Panc1 (cell line): ENCODE measurements at regions of chr21 and their contacts with region 1.

Region 1: GRCh38 chr21:42145569-42146272 is 73.2 kb upstream of the ABCG1 start:
- DNase-seq: no peak
- ATAC-seq: peak; percentile 80
- H3K4me3 ChIP-seq: no peak overlapping the region
- H3K27ac ChIP-seq: no peak overlapping the region
- H3K4me1 ChIP-seq: no peaks in the 10 kb centered on the region; the same call in 1 of the 2 replicates
- H3K27me3 ChIP-seq: no peaks in the 10 kb centered on the region
- CTCF ChIP-seq: peak; percentile 87

Region 2: DNA sequence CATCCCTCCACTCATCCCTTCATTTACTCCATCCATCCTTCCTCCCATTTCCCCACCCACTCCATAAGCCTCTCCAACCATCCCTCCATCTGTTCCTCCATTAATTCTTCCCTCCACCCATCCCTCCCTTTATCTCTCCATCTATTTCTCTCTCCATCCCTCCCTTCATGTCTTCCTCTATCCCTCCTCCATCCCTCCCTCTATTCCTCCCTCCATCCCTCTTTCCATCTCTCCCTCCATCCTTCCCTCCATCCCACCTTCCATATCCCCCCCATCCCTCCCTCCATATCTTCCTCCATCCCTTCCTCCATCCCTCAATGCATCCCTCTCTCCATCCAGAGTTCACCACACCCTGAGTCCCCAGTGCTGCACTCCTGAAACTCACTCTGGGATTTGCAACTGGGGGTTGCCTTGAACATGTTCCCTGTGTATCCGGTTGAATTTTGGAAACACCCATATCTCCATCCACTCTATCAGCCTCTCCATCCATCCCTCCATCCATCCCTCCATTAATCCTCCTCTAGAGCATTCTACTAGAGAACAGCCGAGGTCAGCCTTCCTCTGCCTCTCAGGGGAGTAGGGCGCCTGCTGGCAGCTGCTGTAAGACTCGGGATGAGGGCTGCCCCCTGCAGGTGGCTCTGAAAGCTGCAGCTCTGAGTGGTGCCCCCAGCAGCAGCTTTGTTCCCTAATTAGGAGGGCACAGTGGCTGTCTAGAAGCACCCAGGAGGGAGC is 112.6 kb after region 1 on chr21:
- CTCF ChIA-PET with region 1: interaction called, 13 read pairs
- POLR2A ChIA-PET with region 1: no interaction called
- in situ Hi-C with region 1: no loop called
- intact Hi-C with region 1: loop called (anchors 10 kb)
- DNase-seq: peak; percentile 8
- ATAC-seq: peak; percentile 78
- H3K4me3 ChIP-seq: no peak overlapping the region
- H3K27ac ChIP-seq: no peak overlapping the region
- H3K4me1 ChIP-seq: no peaks in the 10 kb centered on the region; the same call in 1 of the 2 replicates
- H3K27me3 ChIP-seq: no peaks in the 10 kb centered on the region
- CTCF ChIP-seq: peak; percentile 80

Region 3: DNA sequence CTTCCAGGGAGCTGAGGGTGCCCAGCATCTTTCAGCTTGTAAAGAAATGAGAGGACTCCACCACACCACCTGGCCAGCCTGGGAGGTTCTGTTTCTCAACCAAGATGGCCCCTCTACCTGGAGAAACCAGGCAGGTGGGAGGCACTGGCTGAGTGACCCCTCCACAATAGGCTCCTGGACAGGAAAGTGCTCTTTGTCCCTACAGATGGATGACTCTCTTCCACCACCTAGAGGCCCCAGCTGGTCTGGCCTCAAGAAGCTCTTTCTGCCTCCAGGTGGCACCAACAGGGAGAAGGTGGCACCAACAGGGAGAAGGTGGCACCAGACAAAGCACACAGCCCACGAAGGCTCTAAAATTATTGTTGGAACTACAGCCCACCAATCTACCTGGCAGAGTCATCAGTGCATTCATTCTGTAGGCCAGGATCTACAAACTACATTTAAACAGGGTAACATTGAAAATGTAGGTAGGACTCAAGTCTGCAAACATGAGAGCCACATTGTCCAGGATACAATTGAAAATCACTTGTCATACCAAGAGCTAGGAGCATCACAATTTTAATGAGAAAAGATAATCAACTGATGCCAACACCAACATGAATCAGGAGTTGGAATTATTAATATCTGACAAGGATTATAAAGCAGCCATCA is 235.7 kb after region 1 on chr21:
- CTCF ChIA-PET with region 1: interaction called, 5 read pairs
- POLR2A ChIA-PET with region 1: no interaction called
- in situ Hi-C with region 1: no loop called
- intact Hi-C with region 1: loop called (anchors 10 kb)
- DNase-seq: peak; percentile 28
- ATAC-seq: peak; percentile 85
- H3K4me3 ChIP-seq: no peak overlapping the region
- H3K27ac ChIP-seq: no peak overlapping the region
- H3K4me1 ChIP-seq: no peaks in the 10 kb centered on the region
- H3K27me3 ChIP-seq: no peaks in the 10 kb centered on the region
- CTCF ChIP-seq: peak; percentile 82

Region 4: GRCh38 chr21:42449296-42449927 is 303.7 kb after region 1 on chr21:
- CTCF ChIA-PET with region 1: no interaction called
- POLR2A ChIA-PET with region 1: no interaction called
- in situ Hi-C with region 1: no loop called
- intact Hi-C with region 1: loop called (anchors 5 kb)
- DNase-seq: no peak
- ATAC-seq: no peak
- H3K4me3 ChIP-seq: no peak overlapping the region
- H3K27ac ChIP-seq: no peak overlapping the region
- H3K4me1 ChIP-seq: no peaks in the 10 kb centered on the region
- H3K27me3 ChIP-seq: no peaks in the 10 kb centered on the region
- CTCF ChIP-seq: no peak